ENCODE measurements at regions of chr12 and their contacts with region 1.

Region 1: DNA sequence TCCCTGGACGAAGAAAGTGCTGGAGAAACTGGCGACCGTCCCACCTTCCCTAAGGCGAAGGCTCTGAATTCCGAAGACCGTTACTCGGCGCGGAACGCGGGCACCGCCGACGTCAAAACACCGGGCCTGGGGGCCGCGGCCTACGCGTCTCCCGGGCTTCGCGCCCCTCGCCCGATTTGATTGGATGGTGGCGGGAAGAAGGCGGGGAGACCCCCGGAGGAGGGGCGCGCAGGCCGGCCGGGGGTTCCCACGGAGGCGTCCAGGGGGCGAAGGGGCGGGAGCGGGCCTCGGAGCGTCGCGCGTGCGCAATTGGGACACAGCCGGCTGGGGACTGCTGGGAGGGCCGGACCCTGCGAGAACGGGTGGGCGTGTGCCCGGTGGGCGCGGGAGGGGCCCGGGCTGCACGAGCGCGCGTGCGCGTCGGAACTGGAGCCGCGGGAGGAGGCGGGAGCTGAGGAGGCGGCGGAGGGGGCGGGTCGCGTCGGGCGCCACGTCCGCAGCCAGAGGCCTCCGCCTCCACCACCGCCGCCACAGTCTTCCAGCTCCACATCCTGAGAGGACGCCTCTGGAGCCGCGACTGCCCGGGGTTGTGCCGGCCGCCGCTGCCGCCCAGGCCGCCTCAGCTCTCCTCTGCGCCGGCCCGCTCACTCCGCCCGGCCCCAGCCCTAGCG is at the start of gene TMEM263:
- DNase-seq: peak; percentile 96 to 98 (median 97)
- ATAC-seq: peak; percentile 88 to 96 (median 92)
- H3K4me3 ChIP-seq: peak within 1 kb of the TSS; percentile 59 to 98 (median 90)
- H3K27ac ChIP-seq: peak within 1 kb of the TSS; percentile 95 to 100 (median 99)
- H3K4me1 ChIP-seq: peaks cover 0 to 43% (median 25%) of the 10 kb centered on the region in 12 donors
- H3K27me3 ChIP-seq: no peaks in the 10 kb centered on the region
- CTCF ChIP-seq: peak in 3 of 12 donors; percentile 7 to 26 (median 8)
- POLR2A ChIP-seq: peak; percentile 72 to 96
- total RNA-seq, gene TMEM263: 26.8 to 59.2 (median 36.3) TPM

Region 2: GRCh38 chr12:106774005-106774807 is 181.3 kb before region 1 on chr12 and contains the start of gene RIC8B:
- intact Hi-C with region 1: loop called in 1 of 10 experiments (anchors 10 kb)
- DNase-seq: peak; percentile 96 to 97 (median 97)
- ATAC-seq: peak; percentile 97 to 98 (median 97)
- H3K4me3 ChIP-seq: peak within 1 kb of the TSS; percentile 75 to 97 (median 90)
- H3K27ac ChIP-seq: peak within 1 kb of the TSS; percentile 71 to 99 (median 96)
- H3K4me1 ChIP-seq: peaks cover 5 to 31% (median 13%) of the 10 kb centered on the region in 12 donors
- H3K27me3 ChIP-seq: no peaks in the 10 kb centered on the region
- CTCF ChIP-seq: peak in 1 of 12 donors; percentile 13
- POLR2A ChIP-seq: peak in 1 of 2 donors; percentile 74
- total RNA-seq, gene RIC8B: 14.2 to 27.5 (median 22.8) TPM

Region 3: DNA sequence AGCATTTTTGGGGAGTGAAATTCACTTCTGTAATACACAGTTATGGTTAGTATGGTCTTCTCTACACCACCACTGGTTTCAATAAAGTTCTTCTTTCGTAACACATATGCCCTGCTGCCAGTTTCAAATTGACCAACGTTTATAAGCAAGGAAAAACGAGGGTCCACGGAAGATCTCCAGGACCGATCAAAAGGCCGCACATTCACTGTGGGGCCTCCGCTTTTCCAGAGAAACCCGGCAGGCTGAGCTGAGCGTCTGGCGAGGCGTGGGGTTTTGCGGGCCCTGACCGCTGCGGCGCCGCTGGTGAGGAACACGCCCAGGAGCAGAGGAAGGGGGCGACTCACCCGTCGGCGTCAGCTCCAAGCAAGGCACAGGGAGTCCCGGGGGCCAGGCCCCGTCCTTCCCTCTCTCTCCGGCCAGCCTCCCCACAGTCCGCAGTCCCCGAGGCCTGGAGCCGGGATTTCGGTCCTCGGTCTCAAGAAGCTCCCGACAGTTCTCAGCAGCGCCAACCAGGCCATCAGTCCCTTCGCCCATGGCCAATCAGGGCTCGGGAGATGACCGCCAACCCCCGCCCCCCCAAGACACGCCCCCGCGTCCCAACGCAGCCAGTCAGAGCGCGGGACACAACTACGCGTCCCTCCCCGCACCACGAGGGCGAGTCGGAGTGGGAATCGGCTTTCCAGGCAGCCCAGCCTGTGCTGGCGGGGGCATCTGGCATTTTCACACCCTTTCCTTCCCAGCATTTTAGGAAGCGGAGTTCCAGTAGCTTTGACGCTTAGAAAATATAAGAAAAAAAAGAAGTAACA is 31.3 kb after region 1 on chr12 and contains the start of gene MTERF2:
- intact Hi-C with region 1: loop called in 5 of 10 experiments (anchors 1 to 2 kb)
- DNase-seq: peak; percentile 94 to 96 (median 95)
- ATAC-seq: peak; percentile 98 to 99 (median 99)
- H3K4me3 ChIP-seq: peak within 1 kb of the TSS; percentile 61 to 85 (median 71)
- H3K27ac ChIP-seq: peak within 1 kb of the TSS; percentile 78 to 96 (median 90)
- H3K4me1 ChIP-seq: peaks cover 4 to 34% (median 17%) of the 10 kb centered on the region in 12 donors
- H3K27me3 ChIP-seq: no peaks in the 10 kb centered on the region
- CTCF ChIP-seq: peak in 2 of 12 donors; percentile 11 to 16
- POLR2A ChIP-seq: peak in 1 of 2 donors; percentile 93
- total RNA-seq, gene MTERF2: 14.9 to 46.1 (median 27.8) TPM

Region 4: GRCh38 chr12:107027636-107028053 is 72.1 kb after region 1 on chr12:
- intact Hi-C with region 1: loop called in 1 of 10 experiments (anchors 10 kb)
- DNase-seq: no peak
- ATAC-seq: peak; percentile 93 to 96 (median 94)
- H3K4me3 ChIP-seq: peak overlapping the region in 3 of 12 donors; percentile 1 to 12 (median 6)
- H3K27ac ChIP-seq: peak overlapping the region in 11 of 12 donors; percentile 26 to 82 (median 56)
- H3K4me1 ChIP-seq: peaks cover 3 to 63% (median 34%) of the 10 kb centered on the region in 12 donors
- H3K27me3 ChIP-seq: no peaks in the 10 kb centered on the region
- CTCF ChIP-seq: no peak
- POLR2A ChIP-seq: no peak

Measured in heart left ventricle (tissue), 16 donors.